Esophagus squamous epithelium (tissue), 5 donors: ENCODE measurements at regions of chr5 and their contacts with region 1.

Region 1: DNA sequence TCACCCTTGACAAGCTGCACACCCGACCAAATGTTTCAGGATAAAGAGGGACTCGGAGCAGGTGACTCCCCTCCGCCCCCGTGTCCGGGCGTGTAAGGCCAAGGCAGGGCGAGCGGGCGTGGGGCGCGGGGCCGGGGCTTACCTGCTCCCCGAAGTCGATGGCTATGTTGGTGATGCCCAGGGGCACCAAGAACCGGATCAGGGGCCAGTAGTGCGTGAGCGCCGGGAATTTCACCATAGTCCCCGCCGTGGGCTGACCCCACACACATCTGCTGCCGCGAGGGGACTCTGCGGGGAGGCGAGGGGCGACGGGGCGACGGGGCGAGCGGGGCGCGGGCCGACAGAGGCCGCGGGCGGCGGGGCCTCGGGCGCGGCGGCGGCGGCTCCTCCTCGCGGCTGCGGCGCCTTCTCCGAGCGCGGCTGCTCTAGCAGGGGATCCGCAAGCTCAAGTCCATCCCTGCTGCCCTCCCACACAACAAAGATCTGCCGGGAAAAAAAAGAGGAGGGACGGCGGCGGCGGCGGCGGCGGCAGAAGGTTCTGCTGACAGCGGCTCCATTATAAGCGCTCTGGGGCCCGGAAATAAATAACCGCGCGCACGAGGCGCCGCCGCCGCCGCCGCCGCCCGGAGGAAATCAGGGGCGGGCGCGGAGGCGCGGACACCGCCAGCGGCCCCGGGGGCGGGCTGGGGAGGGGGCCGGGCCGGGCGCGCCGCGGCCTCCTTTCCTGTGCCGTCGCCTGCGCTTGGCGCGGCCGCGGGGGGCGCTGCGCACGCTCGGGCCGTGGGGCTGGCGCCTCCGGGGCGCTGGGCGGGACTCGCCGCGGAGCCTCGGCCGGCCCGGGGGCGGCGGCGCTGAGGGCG is at the start of gene ANKH:
- DNase-seq: peak; percentile 16
- H3K4me3 ChIP-seq: peak within 1 kb of the TSS; percentile 61 to 90 (median 75)
- H3K27ac ChIP-seq: peak within 1 kb of the TSS; percentile 89 to 97 (median 92)
- H3K4me1 ChIP-seq: peaks cover 0 to 42% (median 11%) of the 10 kb centered on the region in 3 donors
- H3K27me3 ChIP-seq: no peaks in the 10 kb centered on the region
- CTCF ChIP-seq: peak in 3 of 6 experiments; percentile 14 to 36 (median 31)
- POLR2A ChIP-seq: peak in 2 of 4 donors; percentile 26 to 30
- total RNA-seq, gene ANKH: 10.0 to 38.0 (median 16.7) TPM

Region 2: DNA sequence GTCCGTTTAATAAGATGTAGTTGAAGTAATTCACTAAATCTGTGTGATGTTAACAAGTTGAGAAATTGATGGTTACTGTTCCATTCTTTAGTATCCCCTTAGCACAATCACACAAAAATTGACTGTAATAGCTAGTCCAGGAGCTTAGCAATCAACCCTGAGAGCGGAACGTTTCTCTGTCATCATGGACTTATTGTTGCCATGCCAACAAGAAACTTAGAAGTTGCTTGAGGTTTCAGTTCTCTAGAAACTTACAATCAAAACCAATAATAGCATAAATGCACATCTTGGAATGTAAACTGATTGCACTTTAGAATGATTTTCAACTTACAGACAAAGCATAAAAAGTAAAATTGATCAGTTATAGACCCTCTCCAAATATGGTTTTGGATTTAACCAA is 125.6 kb after region 1 on chr5:
- intact Hi-C with region 1: loop called (anchors 10 kb)
- DNase-seq: no peak
- H3K4me3 ChIP-seq: no peak overlapping the region
- H3K27ac ChIP-seq: no peak overlapping the region
- H3K4me1 ChIP-seq: no peaks in the 10 kb centered on the region
- H3K27me3 ChIP-seq: peaks cover 0 to 7% (median 0%) of the 10 kb centered on the region in 4 donors
- CTCF ChIP-seq: no peak
- POLR2A ChIP-seq: no peak